Endothelial cell of umbilical vein (primary cell): ENCODE measurements at regions of chr6 and their contacts with region 1.

Region 1: DNA sequence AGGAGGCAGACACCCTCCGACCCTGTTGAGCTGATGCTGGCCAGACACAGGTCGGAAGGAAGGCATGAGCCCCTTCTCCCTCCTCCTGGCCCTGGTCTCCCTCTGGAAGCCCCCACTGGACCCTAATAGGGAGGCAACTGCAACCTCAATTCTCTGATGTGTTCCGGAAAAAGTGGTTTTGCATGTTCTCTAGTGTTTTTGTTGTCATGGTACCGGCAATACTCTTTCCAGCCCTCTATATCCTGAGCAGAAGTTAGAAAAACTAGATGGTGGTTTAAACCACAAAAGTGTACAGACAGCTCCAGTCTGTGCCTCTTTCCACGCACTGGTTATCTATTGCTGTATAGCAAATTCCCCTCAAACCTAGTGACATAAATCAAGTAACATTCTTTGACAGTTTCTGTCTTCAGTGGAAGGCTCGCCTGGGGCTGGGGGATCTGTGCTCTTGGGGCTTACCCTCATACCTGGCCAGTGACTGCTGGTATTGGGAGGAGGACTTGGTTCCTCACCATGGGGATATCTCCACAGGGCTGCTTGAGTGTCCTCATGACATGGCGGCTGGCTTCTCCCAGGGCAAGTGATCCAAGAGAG is 37.0 kb downstream of the SYTL3 start:
- DNase-seq: no peak
- H3K4me3 ChIP-seq: no peak overlapping the region
- H3K27ac ChIP-seq: no peak overlapping the region
- H3K4me1 ChIP-seq: peaks cover 3% of the 10 kb centered on the region
- H3K27me3 ChIP-seq: peaks cover 0 to 2% of the 10 kb centered on the region in 2 experiments
- CTCF ChIP-seq: no peak
- POLR2A ChIP-seq: no peak

Region 2: GRCh38 chr6:158605266-158605878 is 81.5 kb before region 1 on chr6:
- CTCF ChIA-PET with region 1: interaction called, 15 read pairs
- POLR2A ChIA-PET with region 1: no interaction called
- dilution Hi-C with region 1: no loop called
- intact Hi-C with region 1: no loop called
- DNase-seq: peak; percentile 85
- H3K4me3 ChIP-seq: no peak overlapping the region
- H3K27ac ChIP-seq: no peak overlapping the region
- H3K4me1 ChIP-seq: no peaks in the 10 kb centered on the region
- H3K27me3 ChIP-seq: no peaks in the 10 kb centered on the region
- CTCF ChIP-seq: peak; percentile 68 to 72
- POLR2A ChIP-seq: no peak

Region 3: DNA sequence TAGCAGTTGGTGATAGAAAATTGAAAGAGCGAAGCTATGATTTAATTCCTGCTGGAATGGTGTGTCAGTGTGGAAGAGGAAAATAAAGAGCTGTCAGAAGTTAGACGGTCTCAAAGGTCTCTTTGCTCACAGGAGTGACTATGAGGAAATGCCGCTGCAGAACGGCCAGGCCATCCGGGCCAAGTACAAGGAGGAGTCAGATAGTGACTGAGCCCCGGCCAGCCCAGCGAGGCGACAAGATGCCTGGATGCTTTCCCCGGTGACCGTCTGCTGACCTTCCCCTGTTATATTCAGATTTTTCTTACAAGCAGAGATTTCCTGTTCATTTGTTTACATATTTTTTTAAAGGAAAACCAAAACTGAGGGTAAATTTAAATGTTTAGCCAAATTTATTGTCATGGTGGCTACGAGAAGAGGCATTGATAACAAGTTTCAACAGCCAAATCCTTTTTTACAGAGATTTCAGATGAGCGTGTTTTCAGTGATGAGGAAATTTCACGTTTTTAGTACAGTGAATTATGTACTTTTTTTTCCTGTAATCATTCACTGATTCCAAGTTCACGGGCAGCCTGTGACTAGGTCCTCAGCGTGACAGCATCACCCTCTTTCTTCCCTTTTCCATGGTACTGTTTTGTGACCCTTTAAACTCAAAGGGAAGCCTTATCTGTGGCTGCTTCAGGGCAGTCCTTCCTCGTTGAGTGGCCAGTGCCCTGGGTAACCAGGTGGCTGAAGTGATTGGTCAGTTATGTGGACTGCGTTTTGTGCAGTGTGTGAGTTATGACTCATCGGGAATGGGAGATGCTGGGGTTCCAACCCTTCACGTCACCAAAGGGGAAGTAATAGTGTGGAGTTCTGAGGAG is 55.0 kb before region 1 on chr6:
- CTCF ChIA-PET with region 1: interaction called, 16 read pairs
- POLR2A ChIA-PET with region 1: no interaction called
- dilution Hi-C with region 1: no loop called
- intact Hi-C with region 1: no loop called
- DNase-seq: peak; percentile 97
- H3K4me3 ChIP-seq: peak overlapping the region in 1 of 3 experiments; percentile 25
- H3K27ac ChIP-seq: peak overlapping the region; percentile 90
- H3K4me1 ChIP-seq: peaks cover 27% of the 10 kb centered on the region
- H3K27me3 ChIP-seq: no peaks in the 10 kb centered on the region
- CTCF ChIP-seq: no peak
- POLR2A ChIP-seq: peak; percentile 45

Region 4: GRCh38 chr6:158644231-158645063 is 42.4 kb before region 1 on chr6 and contains the start of gene DYNLT1:
- CTCF ChIA-PET with region 1: interaction called, 20 read pairs
- POLR2A ChIA-PET with region 1: no interaction called
- dilution Hi-C with region 1: no loop called
- intact Hi-C with region 1: loop called (anchors 2 kb)
- DNase-seq: peak; percentile 92
- H3K4me3 ChIP-seq: peak within 1 kb of the TSS; percentile 74 to 92 (median 85)
- H3K27ac ChIP-seq: peak within 1 kb of the TSS; percentile 92
- H3K4me1 ChIP-seq: peaks cover 28% of the 10 kb centered on the region
- H3K27me3 ChIP-seq: no peaks in the 10 kb centered on the region
- CTCF ChIP-seq: no peak
- POLR2A ChIP-seq: peak; percentile 91
- total RNA-seq, gene DYNLT1: 162 TPM in 2 replicates

Region 5: GRCh38 chr6:158649289-158650143 is 37.4 kb before region 1 on chr6 and contains the start of gene SYTL3:
- CTCF ChIA-PET with region 1: interaction called, 20 read pairs
- POLR2A ChIA-PET with region 1: no interaction called
- dilution Hi-C with region 1: no loop called
- intact Hi-C with region 1: loop called (anchors 2 kb)
- DNase-seq: peak; percentile 29
- H3K4me3 ChIP-seq: no peak within 1 kb of the TSS
- H3K27ac ChIP-seq: no peak within 1 kb of the TSS
- H3K4me1 ChIP-seq: peaks cover 7% of the 10 kb centered on the region
- H3K27me3 ChIP-seq: no peaks in the 10 kb centered on the region
- CTCF ChIP-seq: no peak
- POLR2A ChIP-seq: no peak
- total RNA-seq, gene SYTL3: 0.74 and 0.77 TPM in 2 replicates

Region 6: GRCh38 chr6:158660333-158660754 is 26.5 kb before region 1 on chr6:
- CTCF ChIA-PET with region 1: interaction called, 77 read pairs
- POLR2A ChIA-PET with region 1: no interaction called
- dilution Hi-C with region 1: no loop called
- intact Hi-C with region 1: loop called (anchors 1 kb)
- DNase-seq: no peak
- H3K4me3 ChIP-seq: no peak overlapping the region
- H3K27ac ChIP-seq: no peak overlapping the region
- H3K4me1 ChIP-seq: no peaks in the 10 kb centered on the region
- H3K27me3 ChIP-seq: peaks cover 11 to 14% of the 10 kb centered on the region in 2 experiments
- CTCF ChIP-seq: peak; percentile 44 to 64
- POLR2A ChIP-seq: no peak